Dorsolateral prefrontal cortex (tissue), 120 donors: ENCODE measurements at regions of chr10 and their contacts with region 1.

Region 1: DNA sequence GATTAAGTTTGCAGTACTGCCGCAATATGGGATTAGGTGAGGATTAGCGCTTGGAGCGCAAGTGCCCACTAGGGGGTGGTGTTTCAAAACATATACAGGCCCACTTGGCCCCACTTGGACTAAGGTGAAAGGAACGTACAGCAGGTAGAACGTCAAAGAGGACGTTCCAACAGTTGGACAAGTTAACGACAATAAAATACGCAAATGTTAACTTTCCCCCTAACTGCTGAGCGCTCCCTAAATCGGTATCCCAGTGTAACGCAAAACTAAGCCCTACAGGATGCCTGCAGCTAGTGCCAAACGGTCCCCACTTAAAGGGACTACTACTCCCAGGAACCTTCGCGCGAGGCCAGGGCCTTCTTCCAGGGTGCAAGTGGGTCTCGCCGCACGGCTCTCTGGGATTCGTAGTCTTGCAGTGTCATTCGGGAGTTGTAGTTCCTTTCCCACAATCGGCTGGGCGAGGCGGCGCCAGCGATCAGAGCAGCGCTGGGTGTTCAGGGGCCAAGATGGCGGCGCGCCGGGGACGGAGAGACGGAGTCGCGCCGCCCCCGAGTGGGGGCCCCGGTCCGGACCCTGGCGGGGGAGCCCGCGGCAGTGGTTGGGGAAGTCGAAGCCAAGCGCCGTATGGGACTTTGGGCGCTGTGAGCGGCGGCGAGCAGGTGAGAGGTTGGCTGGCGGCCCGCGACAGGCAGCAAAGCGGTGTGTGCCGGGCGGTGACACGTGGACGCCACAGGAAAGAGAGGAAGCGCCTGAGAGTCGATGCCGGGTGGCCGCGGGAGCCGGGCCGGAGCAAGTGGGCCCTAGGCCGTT is at the start of gene PPRC1:
- DNase-seq: peak; percentile 97 to 100 (median 99)
- H3K4me3 ChIP-seq: peak within 1 kb of the TSS; percentile 63 to 100 (median 93)
- H3K27ac ChIP-seq: peak within 1 kb of the TSS; percentile 59 to 98 (median 91)
- H3K27me3 ChIP-seq: no peaks in the 10 kb centered on the region
- CTCF ChIP-seq: peak; percentile 78 to 99 (median 92)
- total RNA-seq, gene PPRC1: 14.6 to 34.0 (median 20.9) TPM

Region 2: DNA sequence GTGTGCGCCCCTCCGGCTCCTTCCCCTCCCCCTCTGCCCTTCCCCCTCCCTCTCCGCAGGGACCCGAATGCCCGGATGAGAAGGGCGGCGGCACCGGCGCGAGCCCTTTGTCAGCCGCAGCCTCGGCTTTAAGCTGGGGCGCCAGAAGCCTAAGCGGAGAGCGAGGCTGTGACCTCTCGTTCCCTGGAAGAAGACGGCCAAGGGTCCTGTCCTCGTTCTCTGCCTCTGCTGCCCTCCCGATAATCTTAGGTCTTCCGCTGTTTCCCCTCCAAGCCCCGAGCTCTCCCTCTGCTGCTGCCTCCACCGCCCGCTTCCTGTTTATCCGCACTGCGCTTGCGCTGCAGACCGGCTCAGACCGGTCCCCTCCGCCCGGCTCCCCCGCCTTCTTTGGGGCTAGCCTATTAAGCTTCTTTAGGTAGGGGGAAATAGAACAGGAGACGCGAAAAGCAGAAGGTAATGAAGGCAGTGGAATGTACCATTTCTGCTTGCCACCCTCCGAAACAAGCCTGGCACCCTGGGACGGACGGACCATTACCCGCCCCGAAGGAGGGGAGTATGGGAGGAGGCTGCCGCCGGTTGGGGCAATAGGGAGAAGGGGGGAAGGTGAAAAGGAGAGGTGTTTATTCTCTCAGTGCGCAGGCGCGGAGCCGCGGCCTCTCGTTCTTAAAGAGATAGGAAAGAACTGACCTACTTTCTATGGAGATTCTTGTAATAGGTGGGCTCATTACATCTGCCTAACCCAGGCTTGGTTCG is 314.5 kb before region 1 on chr10 and contains the start of gene OGA:
- intact Hi-C with region 1: loop called in 1 of 2 experiments (anchors 5 kb)
- DNase-seq: peak; percentile 93 to 99 (median 97)
- H3K4me3 ChIP-seq: peak within 1 kb of the TSS; percentile 61 to 100 (median 99)
- H3K27ac ChIP-seq: peak within 1 kb of the TSS; percentile 68 to 100 (median 97)
- H3K27me3 ChIP-seq: no peaks in the 10 kb centered on the region
- CTCF ChIP-seq: peak in 10 of 56 donors; percentile 0 to 31 (median 8)
- total RNA-seq, gene OGA: 163 to 362 (median 249) TPM

Region 3: DNA sequence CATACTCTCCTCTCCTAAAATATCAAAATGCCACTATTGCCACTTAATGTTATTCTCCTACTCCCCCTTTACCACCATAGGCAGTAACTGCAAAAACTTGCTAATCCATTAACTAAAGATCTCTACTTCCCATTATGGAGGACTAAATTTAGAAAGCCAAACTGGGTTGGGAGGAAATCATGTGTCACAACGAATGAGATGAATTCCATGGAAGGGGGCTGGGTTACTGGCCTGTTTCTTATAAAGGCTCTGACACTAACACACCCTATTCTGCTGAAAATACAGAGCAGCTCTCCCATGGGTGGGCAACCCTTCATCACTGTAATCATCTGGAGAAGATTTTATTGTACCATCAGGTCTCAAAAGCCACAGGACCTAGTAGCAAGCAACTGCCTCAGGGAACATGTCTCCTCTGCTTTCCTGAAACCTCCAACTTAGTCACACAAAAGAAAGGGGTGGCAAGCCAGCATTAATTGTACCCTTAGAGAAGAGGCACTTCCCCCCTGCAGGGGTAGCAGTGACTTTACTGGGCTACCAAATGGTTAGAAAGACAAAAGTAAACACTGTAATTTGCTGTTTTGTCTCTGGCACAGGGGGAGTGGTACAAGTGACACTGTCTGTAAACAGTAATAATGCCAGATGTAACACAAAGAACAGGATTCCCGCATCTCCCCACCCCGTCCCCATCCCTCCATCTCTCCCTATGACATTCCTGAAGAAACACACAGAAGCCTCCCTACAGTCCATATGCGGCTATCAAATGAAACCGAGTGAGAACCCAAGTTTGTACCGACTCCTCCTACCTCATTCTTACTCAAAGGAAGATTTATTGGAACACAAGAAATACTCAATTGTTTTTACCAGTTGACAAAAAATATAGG is 158.4 kb before region 1 on chr10:
- intact Hi-C with region 1: no loop called
- DNase-seq: no peak
- H3K4me3 ChIP-seq: peak overlapping the region in 19 of 59 donors; percentile 1 to 57 (median 27)
- H3K27ac ChIP-seq: peak overlapping the region in 32 of 59 donors; percentile 7 to 77 (median 52)
- H3K27me3 ChIP-seq: no peaks in the 10 kb centered on the region
- CTCF ChIP-seq: no peak

Region 4: DNA sequence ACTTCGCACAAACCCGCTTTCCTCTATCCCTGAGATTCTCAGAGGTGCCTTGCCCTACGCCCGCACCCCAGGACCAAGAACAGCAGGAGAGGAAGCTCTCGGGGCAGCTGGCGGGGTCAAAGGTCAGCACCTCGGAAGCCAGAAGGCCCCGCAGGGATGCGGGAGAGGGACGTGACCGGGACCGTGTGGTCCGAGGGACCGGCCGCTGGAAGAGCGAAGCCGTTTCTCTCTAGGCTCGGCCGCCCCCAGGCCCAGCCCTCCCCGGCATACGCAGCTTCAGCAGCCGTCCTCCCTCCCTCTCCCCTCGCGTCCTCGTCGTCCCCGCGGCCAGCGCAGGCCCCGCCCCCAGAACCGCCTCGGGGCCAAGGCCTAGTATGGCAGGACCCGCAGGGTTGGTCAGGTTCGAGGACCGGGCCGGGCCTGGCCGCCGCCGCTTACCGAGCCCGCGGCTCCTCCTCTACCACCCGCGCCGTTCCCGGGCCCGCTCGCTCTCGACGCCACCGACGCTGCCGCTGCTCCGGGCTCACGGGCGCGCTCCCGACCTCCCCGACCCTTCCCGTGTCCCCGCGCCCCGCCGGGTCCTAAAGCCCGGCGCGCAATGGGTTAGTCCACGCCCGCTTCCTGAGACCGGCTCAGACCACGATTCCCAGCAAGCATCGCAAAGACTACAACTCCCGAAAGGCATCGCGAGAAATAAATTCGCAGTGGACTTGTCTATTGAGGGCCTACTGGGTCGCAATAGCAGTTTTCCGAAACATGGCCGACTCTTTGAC is 76.9 kb before region 1 on chr10 and contains the start of gene ARMH3:
- intact Hi-C with region 1: loop called (anchors 2 to 5 kb)
- DNase-seq: peak; percentile 87 to 98 (median 95)
- H3K4me3 ChIP-seq: peak within 1 kb of the TSS; percentile 69 to 100 (median 89)
- H3K27ac ChIP-seq: peak within 1 kb of the TSS; percentile 42 to 98 (median 93)
- H3K27me3 ChIP-seq: no peaks in the 10 kb centered on the region
- CTCF ChIP-seq: peak in 26 of 56 donors; percentile 2 to 52 (median 26)
- total RNA-seq, gene ARMH3: 21.8 to 40.4 (median 30.4) TPM

Region 5: GRCh38 chr10:102114861-102115618 is 17.7 kb before region 1 on chr10:
- intact Hi-C with region 1: loop called (anchors 1 to 2 kb)
- DNase-seq: peak; percentile 85 to 96 (median 92)
- H3K4me3 ChIP-seq: peak overlapping the region; percentile 50 to 94 (median 74)
- H3K27ac ChIP-seq: peak overlapping the region; percentile 65 to 100 (median 97)
- H3K27me3 ChIP-seq: no peaks in the 10 kb centered on the region
- CTCF ChIP-seq: peak in 15 of 56 donors; percentile 4 to 35 (median 19)

Region 6: GRCh38 chr10:102120142-102120990 is 12.4 kb before region 1 on chr10 and contains the start of gene LDB1:
- intact Hi-C with region 1: loop called (anchors 1 to 2 kb)
- DNase-seq: peak; percentile 67 to 90 (median 84)
- H3K4me3 ChIP-seq: peak within 1 kb of the TSS; percentile 62 to 96 (median 86)
- H3K27ac ChIP-seq: peak within 1 kb of the TSS; percentile 76 to 100 (median 98)
- H3K27me3 ChIP-seq: no peaks in the 10 kb centered on the region
- CTCF ChIP-seq: peak in 40 of 56 donors; percentile 2 to 69 (median 37)
- total RNA-seq, gene LDB1: 51.3 to 110 (median 80.0) TPM

Region 7: DNA sequence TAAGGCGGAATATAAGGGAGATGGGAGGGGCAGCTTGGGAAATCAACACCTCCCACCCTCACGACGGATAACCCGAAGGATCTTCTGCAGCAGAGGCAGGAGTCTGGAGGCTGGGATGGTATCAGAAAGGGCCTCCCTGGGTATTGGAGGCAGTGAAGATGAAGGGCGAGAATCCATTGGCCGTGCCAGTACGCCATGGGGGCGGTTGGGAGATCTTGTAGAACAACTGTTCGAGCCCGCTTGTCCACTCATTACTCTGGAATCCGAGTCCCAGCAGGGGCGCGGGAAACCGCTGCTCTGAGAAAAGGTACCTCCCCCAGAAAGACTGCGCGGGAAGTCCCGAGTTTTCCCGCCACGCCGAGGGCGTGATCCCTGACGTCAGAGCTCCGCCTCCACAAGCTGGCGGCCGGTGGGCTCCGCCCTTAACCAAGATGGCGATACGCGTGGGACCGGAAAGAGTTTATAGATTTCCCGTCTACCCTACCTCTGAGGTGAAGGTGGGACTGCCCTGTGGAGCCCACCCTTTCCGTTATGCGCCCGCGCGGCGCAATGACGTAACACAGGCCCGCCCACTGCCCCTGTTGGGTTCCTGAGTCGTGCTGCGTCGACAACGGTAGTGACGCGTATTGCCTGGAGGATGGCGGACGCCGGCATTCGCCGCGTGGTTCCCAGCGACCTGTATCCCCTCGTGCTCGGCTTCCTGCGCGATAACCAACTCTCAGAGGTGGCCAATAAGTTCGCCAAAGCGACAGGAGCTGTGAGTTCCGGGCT is 19.2 kb after region 1 on chr10 and contains the start of gene NOLC1:
- intact Hi-C with region 1: loop called (anchors 1 kb)
- DNase-seq: peak; percentile 95 to 100 (median 99)
- H3K4me3 ChIP-seq: peak within 1 kb of the TSS; percentile 57 to 100 (median 87)
- H3K27ac ChIP-seq: peak within 1 kb of the TSS; percentile 30 to 94 (median 82)
- H3K27me3 ChIP-seq: no peaks in the 10 kb centered on the region
- CTCF ChIP-seq: peak in 37 of 56 donors; percentile 4 to 54 (median 28)
- total RNA-seq, gene NOLC1: 41.2 to 90.6 (median 65.3) TPM

Region 8: DNA sequence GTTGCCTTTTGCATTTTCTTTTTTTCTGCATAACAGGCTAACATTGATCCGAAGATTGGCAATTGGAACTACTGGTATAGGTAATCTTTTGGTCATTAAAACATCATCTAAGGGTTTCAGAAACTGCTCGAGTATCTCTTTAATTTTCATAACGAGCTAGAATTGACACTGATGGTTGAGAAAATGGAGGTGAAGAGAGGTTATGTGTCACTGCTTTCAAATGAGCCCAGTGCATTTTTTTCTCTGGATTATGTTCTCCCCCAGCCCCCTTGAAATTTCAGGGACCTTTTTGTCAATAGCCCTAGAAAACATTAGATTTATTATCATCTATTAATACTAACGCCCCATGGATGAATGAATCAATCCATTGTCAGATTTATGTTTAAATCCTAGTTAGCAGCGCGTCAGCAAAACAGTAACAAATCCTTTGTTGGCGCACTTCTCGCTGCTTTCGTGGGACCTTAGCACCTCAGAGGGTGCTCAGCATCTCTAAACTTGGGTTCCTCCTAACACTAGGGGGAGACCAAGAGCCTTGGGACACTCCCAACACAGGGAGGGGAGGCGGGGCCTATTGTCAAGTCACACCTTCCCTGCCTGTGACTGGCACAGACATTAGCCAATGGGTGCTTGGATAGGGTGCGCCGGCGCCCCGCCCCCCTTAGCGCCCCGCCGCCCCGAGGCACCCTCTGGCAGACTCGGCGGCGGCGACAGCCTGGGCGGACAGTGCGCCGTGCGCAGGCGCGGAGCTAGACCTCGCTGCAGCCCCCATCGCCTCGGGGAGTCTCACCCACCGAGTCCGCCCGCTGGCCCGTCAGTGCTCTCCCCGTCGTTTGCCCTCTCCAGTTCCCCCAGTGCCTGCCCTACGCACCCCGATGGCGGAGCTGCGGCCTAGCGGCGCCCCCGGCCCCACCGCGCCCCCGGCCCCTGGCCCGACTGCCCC is 370.8 kb after region 1 on chr10 and contains the start of gene SUFU:
- intact Hi-C with region 1: loop called in 1 of 2 experiments (anchors 2 kb)
- DNase-seq: peak; percentile 96 to 99 (median 99)
- H3K4me3 ChIP-seq: peak within 1 kb of the TSS; percentile 68 to 100 (median 97)
- H3K27ac ChIP-seq: peak within 1 kb of the TSS; percentile 77 to 98 (median 93)
- H3K27me3 ChIP-seq: no peaks in the 10 kb centered on the region
- CTCF ChIP-seq: peak; percentile 88 to 99 (median 95)
- total RNA-seq, gene SUFU: 9.6 to 23.5 (median 14.8) TPM